ENCODE measurements at regions of chr6 and their contacts with region 1.

Region 1: DNA sequence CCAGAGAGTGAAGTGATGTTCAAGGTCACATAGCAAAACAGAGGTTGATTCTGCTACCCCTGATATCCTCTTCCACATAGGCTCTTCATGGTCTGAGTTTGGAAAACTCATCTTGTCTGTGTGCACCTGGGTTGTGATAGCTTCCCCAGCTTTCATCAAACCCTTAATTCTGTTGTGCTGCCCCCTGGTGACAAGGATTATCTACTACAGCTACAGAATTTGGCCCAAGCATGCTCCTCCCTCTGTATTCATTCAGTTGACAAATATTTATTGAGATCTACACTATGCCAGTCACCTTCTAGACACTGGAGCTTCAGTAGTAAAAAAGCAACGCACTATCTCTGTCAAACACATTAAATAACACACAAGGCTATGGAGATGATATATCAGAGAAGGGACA is 50.4 kb downstream of the SMPDL3A start:
- DNase-seq: peak; percentile 63
- ATAC-seq: peak; percentile 96
- H3K4me3 ChIP-seq: no peak overlapping the region
- H3K27ac ChIP-seq: no peak overlapping the region
- H3K4me1 ChIP-seq: no peaks in the 10 kb centered on the region
- H3K27me3 ChIP-seq: no peaks in the 10 kb centered on the region
- CTCF ChIP-seq: peak; percentile 63 to 84 (median 63)
- POLR2A ChIP-seq: no peak
- RAD21 ChIP-seq: peak; percentile 75

Region 2: GRCh38 chr6:122476131-122476530 is 363.3 kb before region 1 on chr6:
- CTCF ChIA-PET with region 1: interaction called, 3 read pairs
- POLR2A ChIA-PET with region 1: no interaction called
- RAD21 ChIA-PET with region 1: interaction called in 1 of 2 experiments, 3 read pairs
- intact Hi-C with region 1: loop called (anchors 1 kb)
- DNase-seq: no peak
- ATAC-seq: no peak
- H3K4me3 ChIP-seq: no peak overlapping the region
- H3K27ac ChIP-seq: no peak overlapping the region
- H3K4me1 ChIP-seq: peaks cover 0 to 4% of the 10 kb centered on the region in 2 experiments; a peak in 1 of 4 replicates
- H3K27me3 ChIP-seq: no peaks in the 10 kb centered on the region
- CTCF ChIP-seq: peak; percentile 33 to 77 (median 61); a peak in 5 of 6 replicates
- POLR2A ChIP-seq: no peak
- RAD21 ChIP-seq: peak; percentile 73

Region 3: DNA sequence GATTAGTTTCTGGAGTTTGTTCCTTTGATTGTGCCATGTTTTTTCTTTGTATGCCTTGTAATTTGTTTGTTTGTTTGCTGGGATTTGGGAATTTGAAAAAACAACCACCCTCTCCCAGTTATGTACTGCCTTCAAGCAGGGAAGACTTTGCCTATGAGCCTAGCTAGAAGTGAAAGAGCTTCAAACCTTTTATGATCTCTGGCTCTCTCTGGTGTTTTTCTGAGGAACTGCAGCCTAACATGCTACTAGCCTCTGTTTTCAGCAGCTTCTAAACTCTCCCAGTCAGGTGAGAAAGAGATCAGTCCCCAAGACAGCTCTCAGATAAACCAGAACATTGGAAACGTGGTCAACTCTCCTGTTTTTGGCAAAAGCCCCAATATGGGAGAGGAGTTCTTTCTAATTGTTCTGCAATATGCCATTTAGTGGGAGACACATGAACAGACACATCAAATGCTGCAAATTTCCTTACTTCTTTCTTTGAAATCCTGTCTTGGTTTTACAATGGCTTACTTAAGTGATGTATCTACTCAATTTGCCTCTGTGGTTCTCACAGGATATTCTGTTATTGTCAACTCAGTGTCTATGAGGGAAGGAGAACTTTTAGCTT is 308.9 kb before region 1 on chr6:
- CTCF ChIA-PET with region 1: interaction called, 15 read pairs
- POLR2A ChIA-PET with region 1: no interaction called
- RAD21 ChIA-PET with region 1: no interaction called
- intact Hi-C with region 1: no loop called
- DNase-seq: peak; percentile 62
- ATAC-seq: peak; percentile 98
- H3K4me3 ChIP-seq: no peak overlapping the region
- H3K27ac ChIP-seq: no peak overlapping the region
- H3K4me1 ChIP-seq: no peaks in the 10 kb centered on the region
- H3K27me3 ChIP-seq: no peaks in the 10 kb centered on the region
- CTCF ChIP-seq: peak; percentile 71 to 90 (median 90)
- POLR2A ChIP-seq: no peak
- RAD21 ChIP-seq: peak; percentile 84

Region 4: DNA sequence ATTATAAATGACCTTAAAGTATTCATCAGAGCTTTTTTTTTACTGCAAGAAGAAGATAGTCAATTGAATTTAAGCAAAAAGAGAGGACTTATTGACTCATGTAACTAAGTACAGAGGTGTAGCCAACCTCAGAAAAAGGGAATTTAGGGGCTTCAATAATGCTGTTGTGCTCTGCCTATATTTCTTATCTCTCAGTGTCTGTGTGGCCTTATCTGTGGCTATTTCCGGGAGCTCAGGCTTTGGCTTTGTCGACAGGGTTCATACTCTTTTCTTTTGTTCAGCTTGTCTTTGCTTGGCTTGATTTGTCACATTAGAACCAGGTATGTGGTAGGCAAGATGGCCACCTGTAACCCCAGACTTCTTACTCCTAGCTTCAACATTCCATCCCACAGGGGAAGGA is 98.5 kb before region 1 on chr6:
- CTCF ChIA-PET with region 1: interaction called, 30 read pairs
- POLR2A ChIA-PET with region 1: no interaction called
- RAD21 ChIA-PET with region 1: interaction called, 3 read pairs
- intact Hi-C with region 1: loop called (anchors 1 kb)
- DNase-seq: no peak
- ATAC-seq: no peak
- H3K4me3 ChIP-seq: no peak overlapping the region
- H3K27ac ChIP-seq: no peak overlapping the region
- H3K4me1 ChIP-seq: no peaks in the 10 kb centered on the region
- H3K27me3 ChIP-seq: no peaks in the 10 kb centered on the region
- CTCF ChIP-seq: no peak
- POLR2A ChIP-seq: no peak
- RAD21 ChIP-seq: no peak

Region 5: DNA sequence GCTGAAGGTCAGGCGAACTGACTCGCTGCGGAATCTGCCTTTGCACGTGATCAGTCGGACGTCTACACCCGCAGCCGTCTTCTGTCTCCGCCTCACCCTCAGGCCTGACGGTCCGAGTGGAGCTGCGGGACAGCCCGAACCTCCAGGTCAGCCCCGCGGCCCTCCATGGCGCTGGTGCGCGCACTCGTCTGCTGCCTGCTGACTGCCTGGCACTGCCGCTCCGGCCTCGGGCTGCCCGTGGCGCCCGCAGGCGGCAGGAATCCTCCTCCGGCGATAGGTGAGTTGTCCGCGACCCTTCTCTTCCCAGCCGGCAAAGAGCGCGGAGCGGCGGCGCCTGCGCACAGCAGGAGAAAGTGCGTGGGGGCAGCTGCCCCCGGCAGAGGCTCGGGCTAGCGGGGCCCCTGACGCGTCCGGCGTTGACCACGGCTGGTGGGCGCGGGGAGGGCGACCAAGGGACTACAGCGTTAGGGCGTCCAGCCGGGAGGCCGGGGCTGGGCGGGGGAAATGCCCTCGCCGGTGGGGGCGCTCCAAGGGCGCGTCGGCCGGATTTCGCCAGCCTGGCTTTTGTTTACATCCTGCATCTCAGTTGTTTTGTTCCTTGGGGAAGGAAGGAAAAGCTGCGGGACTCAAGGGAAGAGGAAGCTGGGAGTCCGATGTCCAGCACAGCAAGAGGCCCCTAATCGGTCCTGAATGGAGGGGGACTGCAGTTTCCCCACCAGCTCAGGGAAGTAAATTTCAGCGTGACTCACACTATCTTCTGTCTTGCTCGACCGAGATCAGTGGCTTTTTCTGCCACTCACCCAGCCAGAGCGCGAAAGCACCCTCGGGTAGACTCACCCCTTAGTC is 50.1 kb before region 1 on chr6 and contains the start of gene SMPDL3A:
- CTCF ChIA-PET with region 1: interaction called, 15 read pairs
- POLR2A ChIA-PET with region 1: no interaction called
- RAD21 ChIA-PET with region 1: no interaction called
- intact Hi-C with region 1: no loop called
- DNase-seq: peak; percentile 57
- ATAC-seq: peak; percentile 84
- H3K4me3 ChIP-seq: peak within 1 kb of the TSS; percentile 68 to 72
- H3K27ac ChIP-seq: peak within 1 kb of the TSS; percentile 74
- H3K4me1 ChIP-seq: peaks cover 13 to 21% of the 10 kb centered on the region in 2 experiments
- H3K27me3 ChIP-seq: no peaks in the 10 kb centered on the region
- CTCF ChIP-seq: peak; percentile 28 to 58 (median 55); a peak in 4 of 6 replicates
- POLR2A ChIP-seq: peak; percentile 33
- RAD21 ChIP-seq: peak; percentile 25; the same call in 1 of the 2 replicates
- total RNA-seq, gene SMPDL3A: 2.4 TPM

Region 6: DNA sequence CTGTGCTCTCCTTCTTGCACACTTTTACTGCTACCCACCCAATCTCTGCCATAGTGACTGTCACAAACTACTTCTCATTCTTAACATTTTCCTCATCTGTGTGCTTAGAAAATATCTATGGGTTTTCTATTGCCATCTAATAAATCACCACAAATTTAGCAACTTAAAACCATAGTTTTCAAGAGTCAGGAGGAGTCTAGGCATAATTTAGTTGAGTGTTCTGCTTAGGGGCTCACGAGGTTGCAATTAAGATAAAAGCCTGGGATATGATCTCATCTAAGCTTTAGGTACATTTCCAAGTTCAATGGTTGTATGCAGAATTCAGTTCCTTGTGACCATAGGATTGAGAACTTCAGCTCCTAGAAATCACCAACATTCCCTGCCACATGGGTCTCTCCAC is 255.3 kb after region 1 on chr6:
- CTCF ChIA-PET with region 1: no interaction called
- POLR2A ChIA-PET with region 1: no interaction called
- RAD21 ChIA-PET with region 1: no interaction called
- intact Hi-C with region 1: no loop called
- DNase-seq: no peak
- ATAC-seq: no peak
- H3K4me3 ChIP-seq: no peak overlapping the region
- H3K27ac ChIP-seq: no peak overlapping the region
- H3K4me1 ChIP-seq: no peaks in the 10 kb centered on the region
- H3K27me3 ChIP-seq: peaks cover 7% of the 10 kb centered on the region; the same call in 1 of the 2 replicates
- CTCF ChIP-seq: no peak
- POLR2A ChIP-seq: no peak
- RAD21 ChIP-seq: no peak

Region 7: DNA sequence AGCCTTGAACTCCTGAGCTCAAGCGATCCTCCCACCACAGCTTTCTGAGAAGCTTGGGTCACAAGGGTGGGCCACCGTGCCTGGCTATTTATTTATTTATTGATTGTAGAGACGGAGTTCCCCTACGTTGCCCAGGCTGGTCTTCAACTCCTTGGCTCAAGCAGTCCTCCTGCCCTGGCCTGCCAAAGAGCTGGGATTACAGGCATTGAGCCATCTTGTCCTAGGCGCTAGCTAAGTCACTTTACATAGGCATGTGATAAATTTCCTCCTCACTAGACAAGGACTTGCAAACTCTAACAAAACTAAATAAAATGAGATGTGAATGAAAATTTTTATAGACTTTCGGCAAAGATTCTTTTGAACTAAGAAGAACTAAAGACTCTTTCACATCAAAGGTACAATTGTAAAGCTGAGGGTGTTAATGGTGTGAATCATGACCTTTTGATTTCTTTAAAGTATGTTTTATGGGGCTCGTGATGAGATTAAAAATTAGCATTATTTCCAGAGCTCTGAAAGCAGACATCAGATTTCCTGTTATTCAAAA is 368.6 kb after region 1 on chr6:
- CTCF ChIA-PET with region 1: no interaction called
- POLR2A ChIA-PET with region 1: no interaction called
- RAD21 ChIA-PET with region 1: no interaction called
- intact Hi-C with region 1: no loop called
- DNase-seq: no peak
- ATAC-seq: no peak
- H3K4me3 ChIP-seq: no peak overlapping the region
- H3K27ac ChIP-seq: no peak overlapping the region
- H3K4me1 ChIP-seq: no peaks in the 10 kb centered on the region
- H3K27me3 ChIP-seq: no peaks in the 10 kb centered on the region
- CTCF ChIP-seq: no peak
- POLR2A ChIP-seq: no peak
- RAD21 ChIP-seq: no peak

Measured in HCT116 (cell line).